ENCODE measurements at regions of chr15 and their contacts with region 1.

Region 1: DNA sequence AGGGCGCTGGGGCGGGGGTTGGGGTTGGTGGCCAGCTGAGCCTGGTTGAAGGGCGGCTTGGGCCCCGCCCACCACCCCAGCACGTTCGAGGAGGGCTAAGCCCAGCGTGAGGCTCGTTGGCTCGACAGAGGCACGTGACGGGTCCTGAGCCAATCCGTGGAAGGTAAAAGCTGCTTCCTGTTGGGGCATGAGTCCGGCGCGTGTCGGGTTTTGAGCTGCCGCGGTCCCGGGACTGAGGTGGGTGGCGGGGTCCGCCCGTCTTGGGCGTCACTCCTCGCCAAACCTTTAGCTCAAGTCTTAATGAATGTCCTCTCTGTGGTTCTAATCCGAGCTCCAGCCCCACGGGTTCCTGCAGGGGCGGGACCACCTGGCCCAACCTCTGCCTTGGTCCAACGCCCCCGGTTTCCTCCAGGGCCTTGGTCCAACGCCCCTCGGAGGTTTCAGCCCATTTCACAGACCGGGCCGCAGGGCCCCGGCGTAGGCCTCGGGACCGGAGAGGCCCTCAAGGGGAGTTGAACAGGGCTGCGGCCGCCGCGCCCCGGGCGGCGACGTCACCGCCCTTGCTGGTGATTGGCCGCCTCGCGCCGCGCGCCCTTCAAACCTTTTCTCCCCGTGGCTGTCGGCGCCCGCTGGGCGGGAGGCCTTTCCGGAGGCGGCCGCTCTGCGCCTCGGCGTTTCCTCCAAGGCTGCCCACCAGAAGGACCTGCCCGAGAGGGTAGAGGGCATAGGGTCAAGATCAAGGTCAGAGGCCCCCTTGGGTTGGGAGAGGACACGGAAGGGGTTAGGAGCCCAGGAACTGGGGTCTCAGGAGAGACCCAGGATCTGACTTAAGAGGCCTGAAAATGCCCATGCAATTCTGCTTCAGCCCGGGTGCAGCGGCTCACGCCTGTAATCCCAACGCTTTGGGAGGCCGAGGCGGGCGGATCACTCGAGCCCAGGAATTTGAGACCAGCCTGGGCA is at the start of gene RCCD1:
- DNase-seq: peak; percentile 84
- ATAC-seq: peak; percentile 91
- H3K4me3 ChIP-seq: peak within 1 kb of the TSS; percentile 77 to 81
- H3K27ac ChIP-seq: peak within 1 kb of the TSS; percentile 96
- H3K4me1 ChIP-seq: peaks cover 17% of the 10 kb centered on the region
- H3K27me3 ChIP-seq: no peaks in the 10 kb centered on the region
- CTCF ChIP-seq: no peak
- total RNA-seq, gene RCCD1: 23.6 TPM

Region 2: DNA sequence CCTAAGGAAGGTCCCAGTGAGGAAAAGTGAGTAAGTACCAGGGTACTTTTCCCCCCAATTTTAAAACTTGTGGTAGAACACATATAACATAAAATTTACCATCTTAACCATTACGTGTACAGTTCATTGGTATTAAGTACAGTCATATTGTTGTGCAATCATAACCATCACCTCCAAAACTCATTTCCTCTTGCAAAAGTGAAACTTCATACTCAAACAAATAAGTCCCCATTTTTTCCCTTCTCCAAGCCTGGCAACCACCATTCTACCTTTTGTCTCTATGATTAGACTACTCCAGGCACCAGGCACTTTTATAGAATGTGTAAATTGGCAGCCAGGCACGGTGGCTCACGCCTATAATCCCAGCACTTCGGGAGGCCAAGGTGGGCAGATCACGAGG is 27.1 kb after region 1 on chr15:
- CTCF ChIA-PET with region 1: interaction called, 11 read pairs
- POLR2A ChIA-PET with region 1: no interaction called
- in situ Hi-C with region 1: no loop called
- intact Hi-C with region 1: no loop called
- DNase-seq: no peak
- ATAC-seq: no peak
- H3K4me3 ChIP-seq: no peak overlapping the region
- H3K27ac ChIP-seq: no peak overlapping the region
- H3K4me1 ChIP-seq: peaks cover 8% of the 10 kb centered on the region
- H3K27me3 ChIP-seq: no peaks in the 10 kb centered on the region
- CTCF ChIP-seq: no peak

Region 3: GRCh38 chr15:91049378-91050127 is 94.6 kb after region 1 on chr15:
- CTCF ChIA-PET with region 1: interaction called, 16 read pairs
- POLR2A ChIA-PET with region 1: no interaction called
- in situ Hi-C with region 1: no loop called
- intact Hi-C with region 1: loop called (anchors 2 kb)
- DNase-seq: peak; percentile 68
- ATAC-seq: peak; percentile 99
- H3K4me3 ChIP-seq: peak overlapping the region in 1 of 2 experiments; percentile 23; a peak in 1 of 4 replicates
- H3K27ac ChIP-seq: no peak overlapping the region
- H3K4me1 ChIP-seq: no peaks in the 10 kb centered on the region
- H3K27me3 ChIP-seq: peaks cover 10% of the 10 kb centered on the region
- CTCF ChIP-seq: peak; percentile 89

Region 4: GRCh38 chr15:91067026-91067425 is 112.0 kb after region 1 on chr15:
- CTCF ChIA-PET with region 1: no interaction called
- POLR2A ChIA-PET with region 1: no interaction called
- in situ Hi-C with region 1: no loop called
- intact Hi-C with region 1: no loop called
- DNase-seq: no peak
- ATAC-seq: no peak
- H3K4me3 ChIP-seq: no peak overlapping the region
- H3K27ac ChIP-seq: no peak overlapping the region
- H3K4me1 ChIP-seq: no peaks in the 10 kb centered on the region
- H3K27me3 ChIP-seq: peaks cover 10% of the 10 kb centered on the region
- CTCF ChIP-seq: no peak

Region 5: GRCh38 chr15:91271565-91272153 is 316.7 kb after region 1 on chr15:
- CTCF ChIA-PET with region 1: interaction called, 12 read pairs
- POLR2A ChIA-PET with region 1: no interaction called
- in situ Hi-C with region 1: no loop called
- intact Hi-C with region 1: loop called (anchors 2 kb)
- DNase-seq: peak; percentile 52
- ATAC-seq: peak; percentile 92
- H3K4me3 ChIP-seq: no peak overlapping the region
- H3K27ac ChIP-seq: no peak overlapping the region
- H3K4me1 ChIP-seq: no peaks in the 10 kb centered on the region; the same call in 1 of the 2 replicates
- H3K27me3 ChIP-seq: peaks cover 11% of the 10 kb centered on the region; the same call in 1 of the 2 replicates
- CTCF ChIP-seq: peak; percentile 84

Measured in Panc1 (cell line).